ENCODE measurements at regions of chr5 and their contacts with region 1.

Region 1: GRCh38 chr5:151447174-151448037 is at the start of gene SLC36A1:
- DNase-seq: peak; percentile 94 to 95
- H3K4me3 ChIP-seq: peak within 1 kb of the TSS; percentile 43 to 75
- H3K27ac ChIP-seq: peak within 1 kb of the TSS; percentile 53 to 59
- H3K4me1 ChIP-seq: no peaks in the 10 kb centered on the region
- H3K27me3 ChIP-seq: no peaks in the 10 kb centered on the region
- CTCF ChIP-seq: peak; percentile 96 to 97 (median 97)
- POLR2A ChIP-seq: peak; percentile 30 to 40
- total RNA-seq, gene SLC36A1: 5.0 to 10.1 (median 5.8) TPM

Region 2: GRCh38 chr5:151509231-151509630 is 61.8 kb after region 1 on chr5:
- intact Hi-C with region 1: loop called (anchors 5 kb)
- DNase-seq: no peak
- H3K4me3 ChIP-seq: no peak overlapping the region
- H3K27ac ChIP-seq: no peak overlapping the region
- H3K4me1 ChIP-seq: no peaks in the 10 kb centered on the region
- H3K27me3 ChIP-seq: no peaks in the 10 kb centered on the region
- CTCF ChIP-seq: no peak
- POLR2A ChIP-seq: no peak

Region 3: GRCh38 chr5:151659001-151659754 is 211.8 kb after region 1 on chr5:
- intact Hi-C with region 1: loop called (anchors 10 kb)
- DNase-seq: peak; percentile 84 to 91
- H3K4me3 ChIP-seq: no peak overlapping the region
- H3K27ac ChIP-seq: peak overlapping the region; percentile 68 to 100
- H3K4me1 ChIP-seq: peaks cover 4 to 7% of the 10 kb centered on the region in 2 donors
- H3K27me3 ChIP-seq: no peaks in the 10 kb centered on the region
- CTCF ChIP-seq: peak; percentile 93 to 96 (median 95)
- POLR2A ChIP-seq: no peak

Region 4: GRCh38 chr5:151740336-151740942 is 293.0 kb after region 1 on chr5:
- intact Hi-C with region 1: loop called (anchors 10 kb)
- DNase-seq: peak; percentile 83 to 86
- H3K4me3 ChIP-seq: no peak overlapping the region
- H3K27ac ChIP-seq: peak overlapping the region; percentile 84 to 93
- H3K4me1 ChIP-seq: peaks cover 4 to 12% of the 10 kb centered on the region in 2 donors
- H3K27me3 ChIP-seq: no peaks in the 10 kb centered on the region
- CTCF ChIP-seq: peak; percentile 80 to 93 (median 90)
- POLR2A ChIP-seq: no peak